Activated B cell treated with CpG ODN at 0.5 μM for 24 hours (primary cell): ENCODE measurements at regions of chr15 and their contacts with region 1.

Region 1: GRCh38 chr15:64093627-64094417 is at the start of gene CIAO2A:
- DNase-seq: peak; percentile 78
- ATAC-seq: peak; percentile 72
- H3K4me3 Mint-ChIP-seq: peak within 1 kb of the TSS; percentile 99
- H3K27ac Mint-ChIP-seq: peak within 1 kb of the TSS; percentile 98
- H3K4me1 Mint-ChIP-seq: peaks cover 93% of the 10 kb centered on the region
- H3K27me3 Mint-ChIP-seq: no peaks in the 10 kb centered on the region
- CTCF ChIP-seq: no peak
- total RNA-seq, gene CIAO2A: 58.4 and 63.2 TPM in 2 replicates

Region 2: DNA sequence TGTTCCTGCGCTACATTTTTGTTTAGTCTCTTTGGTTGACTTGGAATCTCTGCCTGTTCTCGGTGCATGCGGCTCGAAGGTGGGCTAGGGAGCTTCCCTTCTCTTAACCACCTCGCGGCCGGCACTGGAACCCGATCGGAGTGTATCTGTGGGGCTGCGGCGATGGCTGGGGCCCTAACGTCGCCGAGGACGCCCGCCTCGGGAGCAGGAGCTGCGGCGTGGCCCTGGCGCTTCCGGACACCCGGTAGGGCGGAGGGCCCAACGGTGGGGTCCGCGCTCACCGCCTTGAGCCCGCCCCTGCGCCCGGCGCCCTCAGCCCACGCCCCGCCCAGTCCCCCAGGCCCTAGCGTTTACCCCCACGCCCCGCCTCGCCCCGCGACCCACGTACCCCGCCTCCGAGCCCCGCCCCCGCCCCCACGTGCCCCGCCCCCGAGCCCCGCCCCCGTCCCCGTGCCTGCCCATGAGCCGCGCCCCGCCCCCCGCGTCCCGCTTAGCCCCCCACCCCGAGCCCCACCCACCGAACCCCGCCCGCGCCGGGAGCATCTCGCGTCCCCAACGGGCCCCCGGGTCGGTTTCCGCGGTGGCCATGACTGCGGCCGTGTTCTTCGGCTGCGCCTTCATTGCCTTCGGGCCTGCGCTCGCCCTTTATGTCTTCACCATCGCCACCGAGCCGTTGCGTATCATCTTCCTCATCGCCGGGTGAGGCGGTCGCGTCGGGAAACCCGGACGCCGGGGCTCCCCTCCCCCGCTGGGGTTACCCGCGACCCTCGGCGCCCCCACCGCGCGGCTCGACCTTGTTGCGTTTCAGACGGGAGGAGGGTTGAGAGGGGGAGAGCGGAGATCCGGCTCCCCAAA is 816.6 kb before region 1 on chr15 and contains the start of gene APH1B:
- CTCF ChIA-PET with region 1: no interaction called
- POLR2A ChIA-PET with region 1: no interaction called
- intact Hi-C with region 1: loop called (anchors 10 kb)
- DNase-seq: peak; percentile 82
- ATAC-seq: peak; percentile 96
- H3K4me3 Mint-ChIP-seq: peak within 1 kb of the TSS; percentile 90
- H3K27ac Mint-ChIP-seq: peak within 1 kb of the TSS; percentile 89
- H3K4me1 Mint-ChIP-seq: peaks cover 21% of the 10 kb centered on the region
- H3K27me3 Mint-ChIP-seq: no peaks in the 10 kb centered on the region
- CTCF ChIP-seq: no peak
- total RNA-seq, gene APH1B: 22.1 and 23.7 TPM in 2 replicates

Region 3: GRCh38 chr15:63600616-63601025 is 493.2 kb before region 1 on chr15:
- CTCF ChIA-PET with region 1: no interaction called
- POLR2A ChIA-PET with region 1: interaction called, 4 read pairs
- intact Hi-C with region 1: loop called (anchors 5 kb)
- DNase-seq: peak; percentile 90
- ATAC-seq: peak; percentile 71
- H3K4me3 Mint-ChIP-seq: peak overlapping the region; percentile 91
- H3K27ac Mint-ChIP-seq: peak overlapping the region; percentile 91
- H3K4me1 Mint-ChIP-seq: peaks cover 75% of the 10 kb centered on the region
- H3K27me3 Mint-ChIP-seq: no peaks in the 10 kb centered on the region
- CTCF ChIP-seq: no peak

Region 4: GRCh38 chr15:64026591-64026990 is 67.2 kb before region 1 on chr15:
- CTCF ChIA-PET with region 1: no interaction called
- POLR2A ChIA-PET with region 1: no interaction called
- intact Hi-C with region 1: no loop called
- DNase-seq: no peak
- ATAC-seq: no peak
- H3K4me3 Mint-ChIP-seq: no peak overlapping the region
- H3K27ac Mint-ChIP-seq: no peak overlapping the region
- H3K4me1 Mint-ChIP-seq: peaks cover 10% of the 10 kb centered on the region
- H3K27me3 Mint-ChIP-seq: no peaks in the 10 kb centered on the region
- CTCF ChIP-seq: no peak

Region 5: GRCh38 chr15:64067564-64068030 is 26.2 kb before region 1 on chr15:
- CTCF ChIA-PET with region 1: interaction called, 13 read pairs
- POLR2A ChIA-PET with region 1: interaction called, 5 read pairs
- intact Hi-C with region 1: loop called (anchors 1 kb)
- DNase-seq: peak; percentile 54
- ATAC-seq: peak; percentile 91
- H3K4me3 Mint-ChIP-seq: no peak overlapping the region
- H3K27ac Mint-ChIP-seq: peak overlapping the region; percentile 20
- H3K4me1 Mint-ChIP-seq: peaks cover 27% of the 10 kb centered on the region
- H3K27me3 Mint-ChIP-seq: no peaks in the 10 kb centered on the region
- CTCF ChIP-seq: no peak

Region 6: DNA sequence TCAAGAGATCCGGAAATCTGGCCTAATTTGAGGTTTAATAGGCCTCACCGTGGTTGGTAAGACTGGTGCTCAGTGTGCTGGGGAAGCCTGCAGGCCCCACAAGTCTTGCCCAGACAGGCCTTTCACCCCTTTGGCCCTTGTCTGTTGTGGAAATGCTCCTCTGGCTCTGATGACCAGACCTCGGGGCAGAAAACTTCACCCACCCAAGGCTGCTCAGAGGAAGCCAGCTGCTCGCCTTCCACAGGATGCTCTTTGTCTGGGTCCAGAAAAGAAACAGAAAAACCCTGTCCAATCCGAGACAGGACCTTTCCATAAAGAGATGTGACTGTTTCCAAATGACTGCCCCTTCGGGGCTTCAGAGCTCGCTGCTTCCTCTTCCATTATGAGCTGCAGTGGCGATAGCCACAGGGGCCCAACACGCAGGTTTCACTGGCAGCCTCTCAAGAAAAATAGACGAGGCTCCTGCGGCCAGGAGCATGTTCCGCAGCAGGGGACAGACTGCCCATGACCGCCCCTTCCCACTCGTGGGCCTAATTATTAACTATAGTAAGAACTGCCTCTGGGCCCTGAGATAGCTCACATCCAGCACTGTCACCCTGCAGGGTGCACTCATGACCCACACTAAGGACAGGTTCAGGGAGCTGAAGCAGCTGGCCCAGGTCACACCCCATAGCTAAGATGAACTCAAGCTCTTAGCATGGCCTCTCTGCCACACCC is 50.9 kb after region 1 on chr15:
- CTCF ChIA-PET with region 1: no interaction called
- POLR2A ChIA-PET with region 1: interaction called, 78 read pairs
- intact Hi-C with region 1: no loop called
- DNase-seq: no peak
- ATAC-seq: peak; percentile 87
- H3K4me3 Mint-ChIP-seq: peak overlapping the region; percentile 33
- H3K27ac Mint-ChIP-seq: peak overlapping the region; percentile 92
- H3K4me1 Mint-ChIP-seq: peaks cover 32% of the 10 kb centered on the region
- H3K27me3 Mint-ChIP-seq: no peaks in the 10 kb centered on the region
- CTCF ChIP-seq: no peak

Region 7: GRCh38 chr15:64381000-64381752 is 287.4 kb after region 1 on chr15 and contains the start of gene PCLAF:
- CTCF ChIA-PET with region 1: no interaction called
- POLR2A ChIA-PET with region 1: no interaction called
- intact Hi-C with region 1: loop called (anchors 5 kb)
- DNase-seq: peak; percentile 74
- ATAC-seq: peak; percentile 100
- H3K4me3 Mint-ChIP-seq: peak within 1 kb of the TSS; percentile 92
- H3K27ac Mint-ChIP-seq: peak within 1 kb of the TSS; percentile 44
- H3K4me1 Mint-ChIP-seq: peaks cover 20% of the 10 kb centered on the region
- H3K27me3 Mint-ChIP-seq: no peaks in the 10 kb centered on the region
- CTCF ChIP-seq: no peak
- total RNA-seq, gene PCLAF: 2.0 and 3.9 TPM in 2 replicates

Region 8: GRCh38 chr15:64893481-64894394 is 799.9 kb after region 1 on chr15:
- CTCF ChIA-PET with region 1: no interaction called
- POLR2A ChIA-PET with region 1: no interaction called
- intact Hi-C with region 1: loop called (anchors 5 kb)
- DNase-seq: peak; percentile 90
- ATAC-seq: peak; percentile 72
- H3K4me3 Mint-ChIP-seq: peak overlapping the region; percentile 89
- H3K27ac Mint-ChIP-seq: peak overlapping the region; percentile 99
- H3K4me1 Mint-ChIP-seq: peaks cover 76% of the 10 kb centered on the region
- H3K27me3 Mint-ChIP-seq: no peaks in the 10 kb centered on the region
- CTCF ChIP-seq: no peak